Esophagus squamous epithelium (tissue), 5 donors: ENCODE measurements at regions of chr16 and their contacts with region 1.

Region 1: GRCh38 chr16:56866943-56867830 is 2.2 kb downstream of the SLC12A3 start:
- DNase-seq: no peak
- H3K4me3 ChIP-seq: peak overlapping the region in 1 of 4 donors; percentile 15
- H3K27ac ChIP-seq: no peak overlapping the region
- H3K4me1 ChIP-seq: peaks cover 0 to 18% (median 4%) of the 10 kb centered on the region in 3 donors
- H3K27me3 ChIP-seq: no peaks in the 10 kb centered on the region
- CTCF ChIP-seq: peak; percentile 74 to 89 (median 82)
- POLR2A ChIP-seq: no peak

Region 2: DNA sequence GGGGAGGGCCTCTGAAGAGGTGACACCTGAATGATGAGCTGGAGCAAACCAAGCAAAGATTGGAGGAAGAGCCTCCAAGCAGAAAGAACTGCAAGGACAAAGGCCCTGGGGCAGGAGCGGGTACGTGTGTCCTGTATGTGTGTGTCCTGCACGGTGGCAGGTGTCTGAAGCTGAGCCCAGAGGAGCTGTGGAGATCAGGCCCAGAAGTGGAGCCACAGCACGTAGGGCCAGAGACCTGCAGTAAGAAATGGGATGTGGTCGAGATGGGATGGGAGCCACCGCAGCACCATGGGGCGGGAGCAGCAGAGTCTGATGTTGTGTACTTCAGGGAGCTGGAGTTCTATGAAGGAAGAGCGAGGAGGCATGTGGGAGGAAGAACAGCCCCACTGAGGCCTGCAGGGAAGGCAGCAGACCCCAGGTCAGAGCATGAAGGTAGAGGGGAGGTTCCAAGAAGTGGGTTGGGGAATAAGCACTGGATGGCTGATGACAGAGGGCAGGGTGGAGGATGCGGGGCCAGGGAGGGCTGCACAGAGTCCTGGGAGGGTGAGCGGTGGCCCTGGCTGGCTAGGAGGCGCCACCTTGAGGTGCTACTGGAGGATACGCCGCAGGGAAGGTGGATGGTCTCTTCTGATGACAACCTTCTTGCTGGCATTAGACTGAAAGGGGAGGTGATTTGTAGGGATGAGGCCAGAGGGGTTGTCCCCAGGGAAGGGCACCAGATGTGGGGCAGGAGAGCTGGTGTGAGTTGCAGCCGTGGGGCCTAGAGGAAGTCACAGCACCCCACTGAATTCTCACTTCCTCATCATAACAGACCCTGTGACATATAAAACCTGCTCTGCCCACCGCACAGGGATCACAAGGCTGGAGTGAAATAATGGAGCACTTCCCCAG is 83.9 kb after region 1 on chr16:
- intact Hi-C with region 1: loop called (anchors 5 kb)
- DNase-seq: no peak
- H3K4me3 ChIP-seq: no peak overlapping the region
- H3K27ac ChIP-seq: peak overlapping the region in 1 of 4 donors; percentile 6
- H3K4me1 ChIP-seq: no peaks in the 10 kb centered on the region
- H3K27me3 ChIP-seq: peaks cover 0 to 63% (median 0%) of the 10 kb centered on the region in 4 donors
- CTCF ChIP-seq: peak in 5 of 6 experiments; percentile 40 to 57 (median 47)
- POLR2A ChIP-seq: no peak

Region 3: DNA sequence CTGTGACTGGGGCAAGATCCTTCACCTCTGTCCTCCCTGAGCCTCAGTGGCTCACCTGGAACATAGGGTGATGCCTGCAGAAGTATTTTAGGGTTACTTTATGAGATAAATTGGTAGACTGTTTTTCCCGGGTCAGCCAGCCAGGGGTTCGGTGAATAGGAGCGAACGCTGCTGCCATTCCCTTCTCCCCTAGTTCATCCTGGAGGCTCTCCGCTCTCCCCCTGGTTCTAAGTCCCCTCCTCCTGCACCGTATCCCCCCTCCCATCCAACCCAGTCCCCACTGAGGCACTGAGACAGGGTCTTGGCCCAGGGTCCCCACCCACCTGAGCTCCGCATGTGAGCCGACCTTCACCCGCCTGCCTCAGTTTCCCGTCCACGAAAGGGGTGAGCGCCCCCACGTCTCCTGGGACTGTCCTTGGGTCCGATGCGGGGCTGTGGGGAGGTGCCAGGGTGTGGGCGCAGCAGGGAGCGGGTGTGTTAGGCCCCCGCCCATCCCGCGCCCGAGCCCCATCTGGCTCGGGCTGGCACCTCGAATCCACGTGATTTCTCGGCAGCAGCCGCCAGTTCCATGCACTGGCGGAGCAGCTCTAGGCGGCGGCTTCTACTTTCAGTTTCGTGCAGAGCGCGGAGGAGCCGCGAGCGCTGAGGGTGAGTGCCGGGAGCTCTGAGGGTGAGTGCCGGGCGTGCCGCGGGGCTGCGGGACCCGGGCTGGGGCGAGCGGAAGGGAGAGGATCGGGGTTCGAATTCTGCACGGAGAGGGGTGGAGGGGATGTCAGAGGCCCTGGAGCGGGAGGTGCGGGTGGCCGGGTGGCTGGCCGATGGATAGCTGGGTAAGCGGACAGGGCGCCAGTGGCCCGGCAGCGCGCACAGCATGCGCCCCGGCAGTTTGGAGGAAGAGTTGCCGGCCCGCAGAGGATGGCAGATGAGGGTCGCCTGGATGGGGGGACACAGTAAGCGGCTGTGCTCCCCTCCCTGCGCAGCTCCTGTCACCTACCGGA is 122.1 kb after region 1 on chr16 and contains the start of gene NLRC5:
- intact Hi-C with region 1: no loop called
- DNase-seq: peak; percentile 36
- H3K4me3 ChIP-seq: peak within 1 kb of the TSS; percentile 70 to 79 (median 74)
- H3K27ac ChIP-seq: peak within 1 kb of the TSS; percentile 80 to 93 (median 88)
- H3K4me1 ChIP-seq: peaks cover 26 to 85% (median 55%) of the 10 kb centered on the region in 3 donors
- H3K27me3 ChIP-seq: no peaks in the 10 kb centered on the region
- CTCF ChIP-seq: peak in 1 of 6 experiments; percentile 19
- POLR2A ChIP-seq: peak in 3 of 4 donors; percentile 34 to 94 (median 80)
- total RNA-seq, gene NLRC5: 7.7 to 25.2 (median 14.1) TPM

Region 4: DNA sequence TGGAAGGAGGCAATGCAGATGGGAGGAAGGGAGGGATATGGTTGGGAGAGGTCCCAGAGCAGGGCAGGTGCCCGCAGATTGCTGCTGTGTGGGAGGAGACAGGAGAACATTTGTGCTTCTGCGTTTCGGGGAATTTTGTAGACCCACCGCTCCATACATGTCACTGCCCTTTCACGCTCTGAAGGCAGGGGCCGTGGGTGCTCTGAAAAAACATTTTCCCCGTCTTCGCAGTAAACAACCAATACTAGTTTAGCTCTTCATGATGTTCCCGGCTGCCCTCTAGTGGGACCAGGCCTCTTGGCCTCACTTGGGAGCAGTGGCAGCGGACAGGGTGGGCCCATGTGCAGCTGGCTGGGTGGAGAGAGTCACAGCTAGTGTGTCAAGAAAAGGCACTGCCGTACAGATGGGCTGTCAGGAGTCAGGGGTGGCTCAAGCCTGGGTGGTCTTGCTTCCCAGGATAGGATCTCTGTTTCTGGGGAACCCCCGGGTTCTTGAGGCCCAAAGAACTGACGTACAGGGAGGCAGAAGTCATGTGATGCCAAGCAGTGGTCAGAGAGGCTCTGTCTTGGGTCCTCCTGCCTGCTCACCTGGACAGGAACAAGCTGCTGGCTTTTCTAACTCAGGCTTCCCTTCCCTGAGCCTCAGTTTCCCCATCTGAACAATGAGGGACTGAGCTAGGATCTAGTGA is 178.7 kb after region 1 on chr16:
- intact Hi-C with region 1: loop called (anchors 10 kb)
- DNase-seq: peak; percentile 24
- H3K4me3 ChIP-seq: peak overlapping the region in 1 of 4 donors; percentile 18
- H3K27ac ChIP-seq: peak overlapping the region in 1 of 4 donors; percentile 34
- H3K4me1 ChIP-seq: peaks cover 2 to 25% (median 11%) of the 10 kb centered on the region in 3 donors
- H3K27me3 ChIP-seq: no peaks in the 10 kb centered on the region
- CTCF ChIP-seq: peak in 5 of 6 experiments; percentile 30 to 37 (median 36)
- POLR2A ChIP-seq: no peak